ENCODE measurements at regions of chr11 and their contacts with region 1.

Region 1: GRCh38 chr11:69101115-69101791 is 52.5 kb downstream of the TPCN2 start:
- DNase-seq: peak; percentile 93
- H3K4me3 Mint-ChIP-seq: no peak overlapping the region
- H3K27ac Mint-ChIP-seq: no peak overlapping the region
- H3K4me1 Mint-ChIP-seq: peaks cover 26% of the 10 kb centered on the region
- H3K27me3 Mint-ChIP-seq: no peaks in the 10 kb centered on the region
- CTCF ChIP-seq: peak; percentile 99

Region 2: DNA sequence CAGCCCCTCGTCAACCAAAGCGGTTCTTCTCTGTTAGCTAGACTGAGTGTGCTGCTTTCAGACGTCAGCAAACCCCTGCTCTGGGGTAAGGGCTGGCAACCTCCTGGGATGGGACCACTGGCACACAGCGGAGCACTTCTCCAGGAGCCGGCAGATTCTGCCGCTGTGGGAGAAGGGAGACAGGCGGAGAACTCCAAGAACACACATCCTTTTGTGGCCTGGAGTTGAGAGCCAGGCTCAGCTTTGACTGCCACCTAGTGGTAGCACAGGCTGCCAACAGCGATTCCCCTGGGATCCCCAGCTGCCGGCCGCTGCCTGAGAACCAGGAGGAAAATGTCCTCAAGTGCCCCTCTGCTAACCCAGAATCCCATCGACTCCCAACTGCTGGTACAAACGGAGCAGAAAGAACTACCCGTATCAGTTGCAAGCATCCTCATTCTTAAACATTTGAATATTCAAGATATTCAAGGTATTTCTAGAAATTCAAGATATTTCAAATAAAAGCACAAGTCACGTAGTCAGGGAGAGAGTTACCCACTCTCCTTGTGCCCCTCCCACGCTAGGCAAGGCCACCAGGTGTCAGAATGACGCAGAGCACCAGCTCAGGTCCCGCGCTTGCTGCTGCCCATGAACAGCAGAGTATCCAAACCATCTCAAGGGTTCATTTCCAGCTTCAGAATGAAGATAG is 569.0 kb after region 1 on chr11:
- CTCF ChIA-PET with region 1: interaction called, 17 read pairs
- intact Hi-C with region 1: no loop called
- DNase-seq: peak; percentile 86
- H3K4me3 Mint-ChIP-seq: no peak overlapping the region
- H3K27ac Mint-ChIP-seq: no peak overlapping the region
- H3K4me1 Mint-ChIP-seq: peaks cover 26% of the 10 kb centered on the region
- H3K27me3 Mint-ChIP-seq: no peaks in the 10 kb centered on the region
- CTCF ChIP-seq: peak; percentile 82

Region 3: DNA sequence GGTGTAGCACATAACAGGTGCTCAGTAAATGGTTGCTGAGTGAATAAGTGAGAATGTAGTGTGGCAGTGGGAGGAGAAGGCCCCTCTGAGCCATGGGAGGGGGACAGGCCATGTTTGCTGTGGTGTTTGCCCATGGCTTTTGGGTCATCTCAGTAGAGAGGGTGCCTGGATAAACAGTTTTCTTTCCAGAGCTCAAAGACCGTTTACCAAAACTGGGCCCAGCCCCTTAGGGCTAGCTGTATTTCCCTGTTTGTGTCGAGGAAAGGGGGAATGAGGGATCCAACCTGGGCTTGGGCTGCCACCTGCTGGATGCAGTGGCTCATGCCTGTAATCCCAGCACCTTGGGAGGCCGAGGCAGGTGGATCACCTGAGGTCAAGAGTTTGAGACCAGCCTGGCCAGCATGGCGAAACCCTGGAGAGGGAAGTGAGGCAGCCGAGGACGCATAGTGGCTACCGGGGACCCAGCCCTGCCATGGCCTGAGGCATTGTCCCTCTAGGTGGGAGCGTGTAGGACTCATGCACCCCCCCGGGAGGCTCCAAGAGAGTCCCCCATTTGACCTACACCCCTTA is 582.6 kb after region 1 on chr11:
- CTCF ChIA-PET with region 1: interaction called, 6 read pairs
- intact Hi-C with region 1: loop called (anchors 5 kb)
- DNase-seq: peak; percentile 78
- H3K4me3 Mint-ChIP-seq: no peak overlapping the region
- H3K27ac Mint-ChIP-seq: no peak overlapping the region
- H3K4me1 Mint-ChIP-seq: peaks cover 18% of the 10 kb centered on the region
- H3K27me3 Mint-ChIP-seq: no peaks in the 10 kb centered on the region
- CTCF ChIP-seq: peak; percentile 69